ENCODE measurements at regions of chr6 and their contacts with region 1.

Region 1: DNA sequence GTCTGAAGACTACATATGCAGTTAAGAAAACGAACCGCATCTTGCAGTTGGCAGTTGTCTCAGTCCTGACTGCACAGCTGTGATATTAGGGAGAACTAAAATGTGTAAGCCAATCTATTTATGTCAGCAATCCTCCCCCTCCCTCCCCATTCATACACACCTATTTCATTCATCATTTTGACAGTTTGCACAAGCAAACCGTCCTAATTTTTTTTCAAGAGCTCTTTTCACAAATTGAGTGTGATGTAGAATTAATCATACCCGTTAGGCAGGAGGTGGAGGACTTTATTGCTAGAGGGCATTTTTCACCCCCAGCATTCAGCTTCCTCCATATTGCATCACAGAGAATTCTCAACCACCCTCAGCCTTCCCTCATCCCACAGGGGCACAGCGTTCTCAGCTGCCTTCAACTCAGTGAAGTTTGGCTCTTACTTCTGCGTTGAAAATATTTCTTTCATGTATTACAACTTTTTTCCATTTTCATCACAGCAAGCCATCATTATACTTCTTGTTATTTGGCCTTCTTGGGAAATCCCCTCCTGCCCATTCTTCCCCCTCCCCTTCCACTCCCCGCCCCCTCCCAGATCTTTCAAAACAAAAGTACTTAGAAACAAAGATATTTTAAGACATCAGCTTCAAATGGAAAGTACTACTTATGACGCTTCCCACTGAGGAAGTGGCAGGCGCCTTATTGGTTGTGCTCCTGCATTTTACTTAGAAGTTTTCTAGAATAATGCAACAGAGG is 37.5 kb downstream of the NOX3 start:
- DNase-seq: peak; percentile 87
- H3K4me3 Mint-ChIP-seq: peak overlapping the region; percentile 55
- H3K27ac Mint-ChIP-seq: peak overlapping the region; percentile 96
- H3K4me1 Mint-ChIP-seq: peaks cover 43% of the 10 kb centered on the region
- H3K27me3 Mint-ChIP-seq: no peaks in the 10 kb centered on the region

Region 2: DNA sequence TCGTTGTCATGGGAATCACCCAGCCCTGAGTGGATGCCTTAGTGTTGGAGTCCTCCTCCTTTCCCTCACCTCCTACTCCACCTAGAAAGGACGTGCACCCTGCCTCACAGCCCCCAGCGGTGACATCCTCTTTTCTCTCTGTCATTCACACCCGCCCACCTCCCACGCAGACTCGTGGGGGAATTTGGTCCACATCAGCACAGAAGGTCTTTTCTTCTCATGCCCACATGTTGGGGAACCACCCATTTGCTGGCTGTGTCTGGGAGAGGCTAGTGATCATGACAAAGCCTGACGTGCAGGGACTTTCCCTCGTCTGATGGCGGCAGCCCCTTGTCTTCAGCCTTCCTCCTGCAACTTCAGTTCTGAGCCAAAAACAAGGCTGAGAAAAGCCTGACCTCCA is 811.7 kb before region 1 on chr6:
- CTCF ChIA-PET with region 1: no interaction called
- intact Hi-C with region 1: loop called (anchors 2 kb)
- DNase-seq: peak; percentile 97
- H3K4me3 Mint-ChIP-seq: peak overlapping the region; percentile 2
- H3K27ac Mint-ChIP-seq: peak overlapping the region; percentile 79
- H3K4me1 Mint-ChIP-seq: peaks cover 40% of the 10 kb centered on the region
- H3K27me3 Mint-ChIP-seq: peaks cover 2% of the 10 kb centered on the region

Region 3: DNA sequence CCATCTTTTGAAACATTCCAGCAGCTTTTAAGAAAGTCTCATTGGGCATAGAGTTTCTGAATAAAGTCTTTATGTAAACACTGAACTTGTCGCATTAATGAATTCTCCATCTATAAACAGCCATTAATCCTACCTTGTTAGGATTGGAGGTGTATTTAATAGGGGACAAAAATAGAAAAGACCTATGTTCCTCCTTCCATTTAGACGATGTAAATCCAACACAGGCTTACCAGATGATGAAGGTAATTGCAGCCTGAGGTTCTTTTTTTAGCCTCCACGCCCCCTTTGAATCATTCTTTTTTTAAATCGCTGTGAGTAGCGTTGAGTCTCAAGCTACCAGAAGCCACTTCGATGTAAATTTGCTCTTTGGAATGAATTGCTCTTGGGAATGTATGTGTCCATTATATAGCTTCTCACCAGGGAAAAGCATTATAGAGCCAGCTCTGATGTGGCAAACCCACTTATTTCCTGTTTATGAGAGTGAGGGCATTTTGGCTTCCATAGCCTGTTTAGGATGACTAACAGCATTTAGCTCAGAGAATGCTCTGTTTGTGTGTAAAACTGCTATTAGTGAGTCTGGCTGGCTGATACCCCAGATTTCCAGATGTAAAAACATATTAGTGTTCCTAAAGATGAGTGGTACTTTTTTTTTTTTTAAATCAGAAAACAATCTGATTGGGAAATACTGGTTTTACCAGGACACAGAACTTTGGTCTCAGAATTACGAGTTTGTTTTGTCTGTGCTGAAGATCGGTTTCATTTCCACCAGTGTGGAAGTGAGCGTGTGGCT is 229.3 kb before region 1 on chr6:
- CTCF ChIA-PET with region 1: no interaction called
- intact Hi-C with region 1: loop called (anchors 2 kb)
- DNase-seq: no peak
- H3K4me3 Mint-ChIP-seq: no peak overlapping the region
- H3K27ac Mint-ChIP-seq: no peak overlapping the region
- H3K4me1 Mint-ChIP-seq: peaks cover 50% of the 10 kb centered on the region
- H3K27me3 Mint-ChIP-seq: no peaks in the 10 kb centered on the region

Region 4: GRCh38 chr6:155461556-155461955 is 43.4 kb after region 1 on chr6:
- CTCF ChIA-PET with region 1: no interaction called
- intact Hi-C with region 1: loop called (anchors 2 kb)
- DNase-seq: no peak
- H3K4me3 Mint-ChIP-seq: no peak overlapping the region
- H3K27ac Mint-ChIP-seq: no peak overlapping the region
- H3K4me1 Mint-ChIP-seq: peaks cover 25% of the 10 kb centered on the region
- H3K27me3 Mint-ChIP-seq: no peaks in the 10 kb centered on the region

Region 5: DNA sequence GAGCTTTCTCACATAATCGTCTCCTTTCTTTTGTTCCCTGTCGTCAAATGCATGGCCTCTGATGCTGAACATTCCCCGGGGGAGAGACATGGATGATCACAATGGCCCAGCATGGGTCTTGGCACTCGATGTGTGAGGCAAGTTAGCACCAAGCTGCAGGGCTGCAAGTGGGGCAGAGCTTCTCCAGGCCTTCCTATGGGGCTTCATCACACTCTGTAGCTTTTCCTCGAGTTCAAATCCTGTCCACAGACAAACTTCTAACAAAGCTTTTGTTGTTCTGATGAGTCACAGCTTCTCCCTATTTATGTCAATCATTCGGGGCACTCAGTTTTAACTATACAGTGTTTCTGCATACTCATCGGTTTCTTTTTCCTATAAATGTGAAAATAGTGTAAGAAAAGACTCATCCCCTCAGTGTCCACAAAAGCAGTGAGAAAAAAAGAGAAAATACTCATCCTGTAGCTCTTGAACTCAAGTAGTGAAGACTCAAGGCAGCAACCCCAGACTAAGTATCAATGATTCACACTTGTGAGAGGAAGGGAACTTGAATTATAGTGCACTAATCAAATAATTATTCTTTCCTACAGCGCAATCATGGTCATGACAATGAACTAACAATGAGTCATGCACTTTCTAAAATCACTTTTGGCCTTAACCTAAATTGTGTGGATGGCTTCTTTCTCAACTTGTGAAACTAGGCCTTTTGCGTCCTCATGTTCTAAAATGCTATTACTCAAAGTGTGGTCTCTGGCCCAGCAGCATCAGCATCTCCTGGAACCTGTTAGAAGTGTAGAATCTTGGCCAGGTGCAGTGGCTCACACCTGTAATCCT is 105.8 kb after region 1 on chr6:
- CTCF ChIA-PET with region 1: interaction called, 8 read pairs
- intact Hi-C with region 1: loop called (anchors 1 kb)
- DNase-seq: peak; percentile 43
- H3K4me3 Mint-ChIP-seq: no peak overlapping the region
- H3K27ac Mint-ChIP-seq: peak overlapping the region; percentile 84
- H3K4me1 Mint-ChIP-seq: peaks cover 47% of the 10 kb centered on the region
- H3K27me3 Mint-ChIP-seq: no peaks in the 10 kb centered on the region

Region 6: DNA sequence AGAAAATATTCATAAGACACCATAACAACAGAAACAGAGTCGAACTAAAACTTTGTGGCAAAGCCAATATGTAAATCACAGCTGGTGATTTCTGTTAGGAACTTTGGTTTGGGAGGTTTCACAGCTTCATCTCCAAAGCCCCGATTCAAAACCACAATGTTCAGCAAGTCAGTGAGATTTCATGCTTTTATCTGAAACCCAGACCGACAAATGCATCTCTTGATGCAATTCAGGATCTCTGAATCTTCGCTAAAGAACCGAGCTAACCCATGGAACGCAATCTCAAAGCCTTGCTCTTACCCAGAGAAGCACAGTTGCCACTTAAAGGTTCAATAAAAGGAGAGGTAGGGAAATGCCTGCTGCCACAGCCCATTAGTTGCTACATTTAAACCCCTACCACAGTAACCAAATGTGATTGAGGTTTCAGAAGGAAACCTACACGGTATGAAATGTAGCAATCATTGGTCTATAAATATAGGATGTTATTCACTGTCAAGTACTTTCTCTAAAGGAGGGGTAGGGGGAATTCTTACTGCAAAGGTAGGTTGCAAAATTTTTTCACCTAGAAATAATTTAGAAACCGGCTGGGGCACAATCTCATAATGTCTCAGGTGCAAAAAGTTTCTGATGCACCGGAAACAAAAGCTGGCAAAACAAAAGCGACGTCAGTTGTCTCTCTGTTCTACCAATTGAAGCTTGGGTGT is 978.0 kb after region 1 on chr6:
- CTCF ChIA-PET with region 1: no interaction called
- intact Hi-C with region 1: loop called (anchors 2 kb)
- DNase-seq: peak; percentile 62
- H3K4me3 Mint-ChIP-seq: peak overlapping the region; percentile 57
- H3K27ac Mint-ChIP-seq: peak overlapping the region; percentile 77
- H3K4me1 Mint-ChIP-seq: peaks cover 82% of the 10 kb centered on the region
- H3K27me3 Mint-ChIP-seq: peaks cover 6% of the 10 kb centered on the region